Activated CD4-positive, alpha-beta T cell treated with anti-CD3 and anti-CD28 coated beads for 36 hours (primary cell): ENCODE measurements at regions of chr17 and their contacts with region 1.

Region 1: GRCh38 chr17:19457830-19458271 is 46.8 kb downstream of the RNF112 start:
- DNase-seq: no peak
- ATAC-seq: no peak
- H3K4me3 Mint-ChIP-seq: no peak overlapping the region
- H3K27ac Mint-ChIP-seq: no peak overlapping the region
- H3K4me1 Mint-ChIP-seq: peaks cover 29% of the 10 kb centered on the region
- H3K27me3 Mint-ChIP-seq: peaks cover under 1% of the 10 kb centered on the region

Region 2: GRCh38 chr17:19433727-19434340 is 24.0 kb before region 1 on chr17:
- CTCF ChIA-PET with region 1: no interaction called
- POLR2A ChIA-PET with region 1: no interaction called
- intact Hi-C with region 1: loop called in 1 of 2 experiments (anchors 2 kb)
- DNase-seq: no peak
- ATAC-seq: no peak
- H3K4me3 Mint-ChIP-seq: no peak overlapping the region
- H3K27ac Mint-ChIP-seq: no peak overlapping the region
- H3K4me1 Mint-ChIP-seq: no peaks in the 10 kb centered on the region
- H3K27me3 Mint-ChIP-seq: no peaks in the 10 kb centered on the region

Region 3: DNA sequence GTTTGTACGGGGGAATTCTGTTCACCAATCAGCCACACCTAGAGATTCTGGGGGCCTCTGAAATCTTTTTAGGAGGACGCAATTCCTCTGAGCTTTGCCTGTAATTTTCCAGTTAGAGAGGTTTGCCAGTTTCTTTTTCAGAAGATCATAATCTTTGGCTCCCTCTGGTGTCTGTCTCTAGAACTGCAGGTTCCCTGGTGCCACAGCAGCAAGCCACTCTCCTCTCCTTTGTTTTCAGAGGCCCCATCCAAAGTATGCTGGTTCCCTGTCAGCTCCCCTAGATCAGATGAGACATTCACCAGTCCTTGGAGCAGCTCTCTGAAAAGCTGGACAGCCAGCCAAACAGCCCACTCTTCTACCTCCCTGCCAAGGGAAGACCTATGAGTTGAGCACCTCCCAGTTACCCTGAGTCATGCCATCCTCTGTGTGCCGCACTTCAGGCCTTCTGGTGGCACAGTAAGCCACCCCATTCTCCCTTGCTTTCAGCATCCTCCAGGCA is 10.7 kb before region 1 on chr17:
- CTCF ChIA-PET with region 1: interaction called, 10 read pairs
- POLR2A ChIA-PET with region 1: no interaction called
- intact Hi-C with region 1: loop called in 1 of 2 experiments (anchors 2 kb)
- DNase-seq: peak; percentile 76
- ATAC-seq: peak; percentile 49
- H3K4me3 Mint-ChIP-seq: no peak overlapping the region
- H3K27ac Mint-ChIP-seq: no peak overlapping the region
- H3K4me1 Mint-ChIP-seq: peaks cover 3% of the 10 kb centered on the region
- H3K27me3 Mint-ChIP-seq: peaks cover 9% of the 10 kb centered on the region